ENCODE measurements at regions of chr12 and their contacts with region 1.

Region 1: DNA sequence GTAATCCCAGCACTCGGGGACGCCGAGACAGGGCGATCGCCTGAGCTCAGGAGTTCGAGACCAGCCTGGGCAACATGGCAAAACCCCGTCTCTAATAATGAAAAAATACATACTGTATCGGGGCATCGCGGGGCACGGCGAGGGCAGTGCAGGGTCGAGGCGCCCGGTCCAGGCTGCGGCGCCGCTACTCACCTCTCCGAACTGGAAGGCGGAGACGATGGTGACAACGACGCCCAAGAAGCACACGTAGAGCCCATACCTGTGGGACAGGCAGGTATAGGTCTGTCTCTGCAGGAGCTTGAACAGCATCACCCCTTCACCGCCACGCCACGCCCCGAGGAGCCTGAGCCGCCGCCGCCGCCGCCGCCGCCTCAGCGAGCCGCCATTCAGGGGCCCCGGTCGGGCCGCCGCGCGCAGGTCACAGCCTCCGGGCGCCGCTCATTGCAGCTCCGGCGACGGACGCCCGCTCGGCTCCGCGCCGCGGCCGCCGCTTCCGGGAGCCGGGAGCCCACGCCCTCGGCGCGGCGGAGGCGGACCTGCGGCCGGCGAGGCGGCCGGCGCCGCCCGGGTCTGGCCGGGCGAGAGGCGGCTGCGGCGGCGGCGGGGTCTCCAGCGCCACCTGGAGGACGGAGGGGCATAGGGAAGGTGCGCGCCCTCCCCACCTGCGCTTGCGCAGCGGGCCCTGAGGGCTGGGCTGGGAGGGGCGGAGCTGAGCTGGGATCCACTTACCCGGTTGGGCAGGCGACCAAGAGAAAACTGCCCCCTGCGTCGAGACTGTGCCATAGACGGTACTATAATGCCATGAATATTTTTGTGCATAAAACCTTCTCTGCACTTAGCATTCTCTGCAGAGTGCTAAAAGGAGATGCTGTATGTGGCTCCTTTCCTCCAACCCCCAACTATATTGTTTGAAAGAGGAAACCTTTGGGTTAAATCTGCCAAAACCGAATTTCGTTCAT is at the start of gene GNPTAB:
- DNase-seq: peak; percentile 92 to 94
- ATAC-seq: peak; percentile 98 to 100 (median 98)
- H3K4me3 ChIP-seq: peak within 1 kb of the TSS; percentile 74 to 95 (median 87)
- H3K27ac ChIP-seq: peak within 1 kb of the TSS; percentile 38 to 89 (median 87)
- H3K4me1 ChIP-seq: peaks cover 0 to 44% (median 20%) of the 10 kb centered on the region in 9 donors
- H3K27me3 ChIP-seq: no peaks in the 10 kb centered on the region
- CTCF ChIP-seq: peak; percentile 66 to 92 (median 81)
- total RNA-seq, gene GNPTAB: 39.9 to 60.6 (median 49.0) TPM

Region 2: GRCh38 chr12:101414533-101415119 is 416.0 kb before region 1 on chr12:
- intact Hi-C with region 1: loop called in 5 of 10 experiments (anchors 10 kb)
- DNase-seq: peak in 1 of 2 donors; percentile 30
- ATAC-seq: no peak
- H3K4me3 ChIP-seq: no peak overlapping the region
- H3K27ac ChIP-seq: no peak overlapping the region
- H3K4me1 ChIP-seq: no peaks in the 10 kb centered on the region
- H3K27me3 ChIP-seq: no peaks in the 10 kb centered on the region
- CTCF ChIP-seq: peak; percentile 22 to 67 (median 58)

Region 3: DNA sequence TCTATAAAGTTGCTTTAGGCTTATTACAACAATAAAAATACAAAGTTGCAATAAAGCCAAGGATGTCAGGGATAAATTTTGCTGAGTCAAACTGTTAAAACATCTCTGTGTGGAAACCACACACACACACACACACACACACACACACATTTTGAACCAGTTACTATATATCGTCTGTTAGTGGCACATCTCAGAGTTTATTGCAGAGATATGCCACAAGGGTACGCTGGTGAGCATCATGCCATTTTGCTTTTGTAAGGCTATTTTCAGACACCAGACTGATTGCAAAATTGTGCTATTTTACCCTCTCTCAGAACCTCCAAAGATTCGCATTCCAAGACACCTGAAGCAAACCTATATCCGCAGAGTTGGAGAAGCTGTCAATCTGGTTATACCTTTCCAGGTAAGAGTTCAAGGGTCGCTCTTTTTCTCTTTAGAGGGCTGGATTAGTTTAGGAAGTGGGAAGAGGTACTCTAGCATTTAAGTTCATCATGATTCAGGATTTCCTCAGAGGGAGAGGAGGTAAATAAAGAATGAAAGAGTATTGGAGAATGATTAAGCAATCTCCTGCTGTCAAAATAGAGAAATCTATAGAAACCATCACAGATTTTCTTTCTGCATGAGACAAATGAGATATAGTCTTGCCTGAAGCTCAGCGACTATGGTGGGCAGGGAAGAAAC is 160.5 kb before region 1 on chr12:
- intact Hi-C with region 1: loop called in 1 of 10 experiments (anchors 10 kb)
- DNase-seq: peak in 1 of 2 donors; percentile 9
- ATAC-seq: peak in 7 of 8 donors; percentile 33 to 72 (median 54)
- H3K4me3 ChIP-seq: no peak overlapping the region
- H3K27ac ChIP-seq: no peak overlapping the region
- H3K4me1 ChIP-seq: peaks cover 0 to 18% (median 0%) of the 10 kb centered on the region in 9 donors
- H3K27me3 ChIP-seq: peaks cover 0 to 10% (median 0%) of the 10 kb centered on the region in 7 donors
- CTCF ChIP-seq: peak in 8 of 9 donors; percentile 31 to 62 (median 54)

Region 4: DNA sequence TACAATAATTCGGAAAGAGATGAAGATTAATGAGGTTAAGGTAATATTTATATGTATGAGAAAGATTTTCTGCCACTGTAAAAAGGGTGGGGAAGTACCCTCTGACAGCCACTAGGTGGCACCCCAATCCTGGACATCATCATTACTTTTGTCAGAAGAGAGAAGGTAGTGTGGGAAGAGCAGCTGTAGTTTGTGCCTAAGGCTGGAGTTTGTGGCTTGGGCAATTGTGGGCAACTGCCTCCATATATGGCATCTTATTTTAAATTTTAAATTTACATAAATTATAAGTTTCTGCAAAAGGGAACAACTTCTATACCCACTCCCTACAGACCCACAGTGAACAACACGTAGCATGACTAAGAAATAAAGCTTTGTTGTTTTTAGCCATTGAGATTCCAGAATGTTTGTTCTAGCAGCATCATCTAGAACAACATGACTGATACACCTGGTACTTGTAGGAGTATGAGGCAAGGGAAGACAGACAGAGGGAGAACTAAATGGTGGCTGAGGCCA is 56.9 kb before region 1 on chr12:
- intact Hi-C with region 1: loop called (anchors 2 to 5 kb)
- DNase-seq: peak; percentile 18 to 59
- ATAC-seq: peak; percentile 57 to 83 (median 74)
- H3K4me3 ChIP-seq: no peak overlapping the region
- H3K27ac ChIP-seq: no peak overlapping the region
- H3K4me1 ChIP-seq: peaks cover 0 to 40% (median 10%) of the 10 kb centered on the region in 9 donors
- H3K27me3 ChIP-seq: no peaks in the 10 kb centered on the region
- CTCF ChIP-seq: peak; percentile 89 to 98 (median 95)

Region 5: DNA sequence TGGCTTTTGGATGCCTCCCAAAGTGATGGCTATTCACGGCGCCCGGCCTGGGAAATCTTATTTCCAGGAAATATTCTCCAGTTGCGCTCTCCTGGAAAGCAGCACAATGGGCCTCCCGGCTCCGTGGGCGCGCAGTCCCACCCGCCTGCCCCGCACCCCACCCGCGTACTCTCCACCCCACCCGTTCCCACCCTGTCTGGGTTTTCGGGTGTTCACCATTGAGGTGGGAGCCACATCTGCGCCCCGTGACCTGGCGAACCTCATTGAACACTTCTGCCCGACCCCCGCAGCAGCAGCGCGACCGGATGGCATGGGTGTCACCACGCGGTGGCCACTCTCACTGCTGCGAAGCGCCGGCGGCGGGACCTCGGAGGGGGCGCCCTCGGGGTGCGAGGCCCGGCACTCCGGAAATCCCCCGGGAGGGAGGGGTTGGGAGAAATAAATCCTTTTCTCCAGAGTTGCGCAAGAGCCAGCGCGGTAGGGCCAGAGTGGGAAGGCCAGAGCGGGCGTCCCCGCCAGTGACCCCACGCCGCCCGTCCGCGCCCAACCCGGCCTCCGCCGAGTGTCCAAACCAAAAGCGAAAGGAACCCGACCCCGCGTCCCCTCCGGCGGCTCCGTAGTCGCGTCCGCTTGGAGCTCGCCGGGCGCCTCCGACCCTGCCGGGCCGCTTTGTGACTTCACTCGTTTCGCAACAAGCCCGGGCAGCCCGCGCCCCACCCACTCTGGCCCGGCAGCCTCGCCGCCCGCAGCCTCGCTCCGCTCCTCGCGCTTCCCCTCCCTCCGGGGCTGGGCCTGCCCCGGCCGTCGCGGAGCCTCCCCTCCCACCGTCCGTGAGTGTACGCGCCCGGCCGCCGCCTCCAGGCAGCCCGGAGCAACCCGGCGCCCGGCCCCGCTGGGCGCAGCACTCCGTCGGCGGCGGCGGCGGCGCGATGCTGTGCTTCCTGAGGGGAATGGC is 46.5 kb after region 1 on chr12 and contains the start of gene DRAM1:
- intact Hi-C with region 1: loop called in 2 of 10 experiments (anchors 2 to 5 kb)
- DNase-seq: peak; percentile 88 to 92
- ATAC-seq: peak; percentile 88 to 96 (median 92)
- H3K4me3 ChIP-seq: peak within 1 kb of the TSS; percentile 41 to 96 (median 78)
- H3K27ac ChIP-seq: peak within 1 kb of the TSS; percentile 72 to 99 (median 97)
- H3K4me1 ChIP-seq: peaks cover 0 to 52% (median 15%) of the 10 kb centered on the region in 9 donors
- H3K27me3 ChIP-seq: no peaks in the 10 kb centered on the region
- CTCF ChIP-seq: peak in 4 of 9 donors; percentile 3 to 29 (median 24)
- total RNA-seq, gene DRAM1: 2.4 to 19.6 (median 3.3) TPM